A673 (cell line): ENCODE measurements at regions of chr1 and their contacts with region 1.

Region 1: DNA sequence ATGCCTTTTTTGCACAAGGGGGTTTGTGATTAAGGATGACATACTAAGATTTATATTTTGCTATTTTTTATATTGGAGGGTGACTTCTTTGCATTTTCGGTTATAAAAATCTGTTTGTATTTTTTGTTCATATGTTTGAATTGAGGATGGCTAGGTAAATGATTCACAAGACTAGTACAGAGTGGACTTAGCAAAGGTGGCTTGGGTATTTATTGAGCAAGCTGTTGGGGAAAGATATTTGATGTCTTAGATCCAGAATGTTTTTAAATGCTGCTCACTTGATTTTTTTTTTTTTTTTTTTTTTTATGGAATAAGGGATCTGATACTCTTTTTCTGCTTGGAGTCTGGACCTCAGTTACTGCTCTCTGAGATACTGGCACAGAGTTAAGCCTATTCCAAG is 100.6 kb downstream of the DNM3 start:
- DNase-seq: no peak
- H3K4me3 ChIP-seq: no peak overlapping the region
- H3K27ac ChIP-seq: no peak overlapping the region
- H3K4me1 ChIP-seq: no peaks in the 10 kb centered on the region
- H3K27me3 ChIP-seq: no peaks in the 10 kb centered on the region
- CTCF ChIP-seq: no peak

Region 2: GRCh38 chr1:171965777-171966176 is 23.9 kb after region 1 on chr1:
- CTCF ChIA-PET with region 1: interaction called, 10 read pairs
- POLR2A ChIA-PET with region 1: no interaction called
- intact Hi-C with region 1: no loop called
- DNase-seq: no peak
- H3K4me3 ChIP-seq: no peak overlapping the region
- H3K27ac ChIP-seq: no peak overlapping the region
- H3K4me1 ChIP-seq: no peaks in the 10 kb centered on the region
- H3K27me3 ChIP-seq: no peaks in the 10 kb centered on the region
- CTCF ChIP-seq: no peak

Region 3: DNA sequence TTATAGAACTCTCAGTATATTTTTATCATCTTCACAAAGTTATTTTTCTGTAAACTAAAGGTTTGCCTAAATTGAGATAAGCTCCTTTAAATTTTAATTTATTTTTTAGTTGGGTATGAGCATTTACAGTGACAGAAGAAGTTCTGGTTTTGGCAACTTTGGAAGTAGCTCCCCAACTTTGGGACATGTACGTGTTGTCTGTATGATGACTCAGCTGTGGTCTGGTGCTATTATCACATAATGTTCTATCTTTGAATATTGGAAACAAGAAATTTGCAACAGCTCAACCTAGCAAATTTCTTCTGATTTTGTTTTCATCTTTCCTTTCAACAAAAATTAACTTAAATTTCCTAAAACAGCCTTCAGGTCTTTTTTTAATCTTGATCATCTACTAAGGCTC is 431.9 kb after region 1 on chr1:
- CTCF ChIA-PET with region 1: no interaction called
- POLR2A ChIA-PET with region 1: no interaction called
- intact Hi-C with region 1: no loop called
- DNase-seq: no peak
- H3K4me3 ChIP-seq: no peak overlapping the region
- H3K27ac ChIP-seq: no peak overlapping the region
- H3K4me1 ChIP-seq: peaks cover 22% of the 10 kb centered on the region
- H3K27me3 ChIP-seq: no peaks in the 10 kb centered on the region
- CTCF ChIP-seq: no peak